Left cardiac atrium (tissue), 4 donors: ENCODE measurements at regions of chr17 and their contacts with region 1.

Region 1: GRCh38 chr17:36682773-36683172 is 81.4 kb downstream of the MRM1 start:
- DNase-seq: no peak
- ATAC-seq: no peak

Region 2: GRCh38 chr17:36470499-36470898 is 212.3 kb before region 1 on chr17:
- intact Hi-C with region 1: loop called in 1 of 2 experiments (anchors 5 kb)
- DNase-seq: no peak
- ATAC-seq: no peak